Right cardiac atrium (tissue), 5 donors: ENCODE measurements at regions of chr3 and their contacts with region 1.

Region 1: DNA sequence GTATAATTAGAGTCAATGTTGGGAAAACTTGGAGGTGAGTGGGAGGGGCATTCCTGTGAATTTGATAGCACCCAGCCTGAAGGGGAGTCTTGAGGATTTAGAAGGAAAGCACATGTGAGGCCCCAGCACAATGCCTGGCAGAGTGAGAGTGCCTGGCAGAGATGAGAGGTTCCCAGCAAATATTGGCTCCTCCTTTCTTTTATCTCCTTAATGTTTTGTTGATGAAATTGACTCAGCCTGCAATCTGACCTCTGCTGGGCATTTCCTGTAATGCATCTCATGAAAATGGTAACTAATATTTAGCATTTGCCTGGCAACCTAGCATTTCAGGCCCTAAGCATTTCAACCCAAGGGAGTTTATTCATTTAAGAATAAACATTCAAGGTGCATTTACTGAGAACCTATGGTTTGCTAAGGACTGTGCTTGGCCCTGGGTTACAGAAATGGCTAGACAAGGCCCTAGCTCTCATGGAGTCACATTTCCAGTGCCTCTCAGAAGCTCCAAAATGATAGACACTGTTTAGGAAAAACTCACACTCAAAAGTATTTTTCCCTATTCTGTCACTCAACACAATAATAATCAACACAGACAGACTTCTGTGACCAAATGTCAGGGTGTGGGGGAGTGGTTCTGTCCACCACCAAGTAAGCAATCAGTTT is 19.0 kb downstream of the PDHB start:
- DNase-seq: peak; percentile 62 to 84 (median 77)
- ATAC-seq: peak; percentile 75 to 76
- H3K4me3 ChIP-seq: no peak overlapping the region
- H3K27ac ChIP-seq: no peak overlapping the region
- H3K4me1 ChIP-seq: no peaks in the 10 kb centered on the region
- H3K27me3 ChIP-seq: no peaks in the 10 kb centered on the region

Region 2: GRCh38 chr3:58198362-58198761 is 216.3 kb before region 1 on chr3:
- intact Hi-C with region 1: loop called in 1 of 4 experiments (anchors 10 kb)
- DNase-seq: no peak
- ATAC-seq: no peak
- H3K4me3 ChIP-seq: no peak overlapping the region
- H3K27ac ChIP-seq: peak overlapping the region; percentile 30
- H3K4me1 ChIP-seq: peaks cover 4% of the 10 kb centered on the region
- H3K27me3 ChIP-seq: no peaks in the 10 kb centered on the region

Region 3: GRCh38 chr3:58305882-58306711 is 108.6 kb before region 1 on chr3 and contains the starts of genes HTD2 and RPP14:
- intact Hi-C with region 1: loop called in 1 of 4 experiments (anchors 5 kb)
- DNase-seq: peak; percentile 99 to 100 (median 100)
- ATAC-seq: peak; percentile 95 to 96
- H3K4me3 ChIP-seq: peak within 1 kb of the TSS; percentile 88
- H3K27ac ChIP-seq: peak within 1 kb of the TSS; percentile 100
- H3K4me1 ChIP-seq: peaks cover 5% of the 10 kb centered on the region
- H3K27me3 ChIP-seq: no peaks in the 10 kb centered on the region
- total RNA-seq, gene HTD2: 10.1 to 16.9 (median 12.2) TPM
- total RNA-seq, gene RPP14: 15.7 to 24.9 (median 18.3) TPM

Region 4: DNA sequence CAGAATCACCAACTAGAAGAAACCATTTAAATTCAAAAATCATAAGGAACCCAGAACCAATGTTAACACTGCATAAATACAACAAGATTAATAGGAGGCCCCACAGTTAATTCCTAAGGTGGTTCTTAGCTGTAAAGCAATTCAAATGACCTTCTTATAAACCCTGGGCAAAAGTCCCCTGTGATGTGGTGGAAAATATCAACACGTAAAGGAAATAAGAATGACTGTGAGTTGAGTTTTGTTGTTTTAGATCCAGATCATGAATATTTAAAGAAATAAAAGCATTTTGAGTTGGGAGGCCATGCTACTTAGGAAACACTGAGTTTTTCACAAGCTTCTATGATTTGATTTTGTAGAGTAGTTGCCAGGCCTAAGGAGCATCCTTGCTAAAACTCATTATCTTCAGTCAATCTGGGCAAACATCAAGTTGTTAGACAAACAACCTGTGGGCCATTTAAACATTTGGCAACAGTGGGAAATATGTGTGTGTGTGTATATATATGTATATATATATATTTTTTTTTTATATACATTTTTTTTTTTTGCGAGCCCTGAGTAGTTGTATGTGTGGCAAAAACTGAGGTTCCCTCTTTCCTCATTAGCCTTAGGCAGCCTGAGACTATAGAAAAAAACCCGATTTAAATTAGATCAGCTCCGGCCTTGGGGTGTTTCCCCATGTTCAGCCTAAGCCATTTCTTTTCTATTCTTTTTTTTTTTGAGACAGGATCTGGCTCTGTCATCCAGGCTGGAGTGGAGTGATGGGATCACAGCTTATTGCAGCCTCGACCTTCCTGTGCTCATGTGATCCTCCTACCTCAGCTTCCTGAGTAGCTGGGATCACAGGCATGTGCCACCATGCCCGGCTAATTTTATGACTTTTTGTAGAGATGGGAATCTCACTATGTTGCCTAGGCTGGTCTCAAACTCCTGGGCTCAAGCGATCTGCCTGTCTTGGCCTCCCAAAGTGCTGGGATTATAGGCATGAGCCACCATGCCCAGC is 90.0 kb before region 1 on chr3:
- intact Hi-C with region 1: loop called in 2 of 4 experiments (anchors 5 kb)
- DNase-seq: no peak
- ATAC-seq: peak in 1 of 2 donors; percentile 17
- H3K4me3 ChIP-seq: no peak overlapping the region
- H3K27ac ChIP-seq: peak overlapping the region; percentile 42
- H3K4me1 ChIP-seq: no peaks in the 10 kb centered on the region
- H3K27me3 ChIP-seq: no peaks in the 10 kb centered on the region

Region 5: DNA sequence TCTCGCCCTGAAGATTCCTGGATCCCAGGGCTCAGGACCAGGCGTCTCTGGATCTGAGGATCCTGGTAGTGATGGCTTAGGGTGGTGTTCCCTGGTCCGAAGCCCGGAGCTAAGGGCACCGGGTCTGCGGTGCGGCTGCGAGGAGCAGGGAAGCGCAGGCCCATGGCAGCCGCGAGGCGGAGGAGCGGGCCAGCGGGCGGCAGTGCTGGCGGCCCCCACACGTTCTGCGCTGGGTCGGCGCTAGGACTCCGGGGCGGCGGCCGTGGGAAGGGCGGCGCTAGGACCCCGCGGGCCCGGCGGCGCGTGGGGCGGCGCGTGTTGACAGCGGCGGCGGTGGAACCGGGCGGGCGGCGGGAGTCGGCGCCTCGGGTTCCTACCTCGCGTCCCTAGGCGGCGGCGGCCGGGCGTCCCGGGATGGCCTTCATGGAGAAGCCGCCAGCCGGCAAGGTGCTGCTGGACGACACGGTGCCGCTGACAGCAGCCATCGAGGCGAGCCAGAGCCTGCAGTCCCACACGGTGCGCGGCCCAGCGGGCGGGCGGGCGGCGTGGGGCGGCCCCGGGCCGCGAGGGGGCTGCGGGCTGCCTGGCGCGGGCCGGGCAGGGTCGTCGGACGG is 82.0 kb before region 1 on chr3 and contains the start of gene PXK:
- intact Hi-C with region 1: loop called in 3 of 4 experiments (anchors 5 kb)
- DNase-seq: peak; percentile 84 to 94 (median 94)
- ATAC-seq: peak; percentile 96 to 97
- H3K4me3 ChIP-seq: peak within 1 kb of the TSS; percentile 92
- H3K27ac ChIP-seq: peak within 1 kb of the TSS; percentile 41
- H3K4me1 ChIP-seq: peaks cover 4% of the 10 kb centered on the region
- H3K27me3 ChIP-seq: no peaks in the 10 kb centered on the region
- total RNA-seq, gene PXK: 11.4 to 17.3 (median 13.7) TPM